ENCODE measurements at regions of chr19 and their contacts with region 1.

Region 1: GRCh38 chr19:45478454-45479238 is 10.8 kb downstream of the FOSB start:
- DNase-seq: peak; percentile 78 to 91 (median 89)
- ATAC-seq: peak; percentile 95 to 96
- H3K4me3 ChIP-seq: peak overlapping the region; percentile 67
- H3K27ac ChIP-seq: peak overlapping the region; percentile 94
- H3K4me1 ChIP-seq: no peaks in the 10 kb centered on the region
- H3K27me3 ChIP-seq: no peaks in the 10 kb centered on the region

Region 2: GRCh38 chr19:45428384-45429231 is 50.0 kb before region 1 on chr19:
- intact Hi-C with region 1: loop called in 1 of 4 experiments (anchors 2 kb)
- DNase-seq: peak; percentile 73 to 91 (median 80)
- ATAC-seq: peak; percentile 50 to 57
- H3K4me3 ChIP-seq: peak overlapping the region; percentile 15
- H3K27ac ChIP-seq: peak overlapping the region; percentile 85
- H3K4me1 ChIP-seq: no peaks in the 10 kb centered on the region
- H3K27me3 ChIP-seq: no peaks in the 10 kb centered on the region

Region 3: GRCh38 chr19:45439569-45440254 is 38.9 kb before region 1 on chr19:
- intact Hi-C with region 1: loop called (anchors 1 to 2 kb)
- DNase-seq: peak; percentile 88 to 96 (median 95)
- ATAC-seq: peak; percentile 66 to 78
- H3K4me3 ChIP-seq: peak overlapping the region; percentile 66
- H3K27ac ChIP-seq: peak overlapping the region; percentile 87
- H3K4me1 ChIP-seq: peaks cover 7% of the 10 kb centered on the region
- H3K27me3 ChIP-seq: no peaks in the 10 kb centered on the region

Region 4: DNA sequence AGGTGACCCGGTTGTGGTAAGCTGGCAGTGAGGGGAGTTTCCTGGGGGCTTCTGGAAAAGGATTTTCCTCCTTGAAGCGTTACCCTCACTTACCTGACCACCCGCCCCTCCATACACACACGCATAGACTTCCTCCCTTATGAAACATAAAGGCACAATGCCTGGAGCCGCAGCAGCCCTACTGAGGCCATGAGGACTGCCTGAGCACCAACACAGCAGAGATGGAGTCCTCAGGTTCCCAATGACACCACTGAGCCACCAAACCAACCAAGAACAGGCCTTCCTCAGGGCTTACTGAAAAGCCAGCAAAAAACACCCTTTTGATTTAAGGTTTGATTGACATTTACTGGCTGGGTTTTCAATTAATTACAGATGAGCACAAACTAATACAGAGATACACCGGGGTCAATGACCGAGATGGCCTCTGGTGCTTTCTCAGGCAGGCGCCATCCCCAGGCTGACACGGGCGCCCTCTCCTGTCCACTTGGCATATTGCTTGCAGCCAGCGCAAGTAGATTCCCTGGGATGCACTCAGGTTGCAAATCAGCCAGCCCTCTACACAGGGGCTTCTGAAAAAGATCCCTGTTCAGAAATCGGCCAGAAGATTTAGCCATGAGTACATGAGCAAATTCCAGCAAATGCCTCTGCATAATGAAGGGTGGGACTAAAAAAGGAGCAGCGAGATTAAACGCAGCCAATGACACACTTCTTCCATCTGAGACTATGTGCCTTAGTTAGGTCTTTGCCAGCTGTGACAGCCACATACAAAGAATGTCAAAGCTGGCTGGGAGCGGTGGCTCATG is 91.2 kb after region 1 on chr19:
- intact Hi-C with region 1: no loop called
- DNase-seq: peak in 2 of 3 donors; percentile 71 to 80
- ATAC-seq: peak; percentile 53 to 55
- H3K4me3 ChIP-seq: no peak overlapping the region
- H3K27ac ChIP-seq: peak overlapping the region; percentile 64
- H3K4me1 ChIP-seq: peaks cover 5% of the 10 kb centered on the region
- H3K27me3 ChIP-seq: no peaks in the 10 kb centered on the region